ENCODE measurements at regions of chr9 and their contacts with region 1.

Region 1: DNA sequence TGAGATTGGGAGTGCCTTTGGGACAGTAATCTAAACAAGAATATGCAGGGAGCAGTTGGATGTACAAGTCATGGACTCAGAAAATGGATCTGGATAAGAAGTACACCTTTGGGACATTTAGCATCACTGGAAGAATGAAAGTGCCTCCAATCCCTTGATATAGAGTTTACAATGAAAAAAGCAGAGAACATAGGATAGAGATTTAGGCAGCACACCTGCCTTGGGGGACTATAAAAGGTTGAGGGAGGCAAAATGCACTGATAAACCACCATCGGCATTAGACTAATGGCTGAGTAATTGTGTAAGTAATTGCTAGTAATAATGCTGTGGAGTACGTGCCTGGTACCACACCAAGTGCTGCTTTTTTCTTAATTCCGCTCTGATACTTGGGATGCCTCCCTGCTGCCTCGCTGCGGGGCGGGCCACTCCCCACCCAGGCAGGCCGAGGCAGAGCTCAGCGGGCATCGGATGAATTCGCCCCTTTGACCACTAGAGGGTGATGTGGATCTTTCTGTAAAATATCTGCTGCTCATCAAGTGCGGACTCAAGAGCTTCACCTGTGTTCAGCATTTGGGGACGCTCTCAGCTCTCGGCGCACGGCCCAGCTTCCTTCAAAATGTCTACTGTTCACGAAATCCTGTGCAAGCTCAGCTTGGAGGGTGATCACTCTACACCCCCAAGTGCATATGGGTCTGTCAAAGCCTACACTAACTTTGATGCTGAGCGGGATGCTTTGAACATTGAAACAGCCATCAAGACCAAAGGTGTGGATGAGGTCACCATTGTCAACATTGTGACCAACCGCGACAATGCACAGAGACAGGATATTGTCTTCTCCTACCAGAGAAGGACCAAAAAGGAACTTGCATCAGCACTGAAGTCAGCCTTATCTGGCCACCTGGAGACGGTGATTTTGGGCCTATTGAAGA is 99.9 kb downstream of the ANKRD18B start:
- DNase-seq: peak; percentile 82 to 90
- ATAC-seq: peak; percentile 94 to 96
- H3K4me3 ChIP-seq: no peak overlapping the region
- H3K27ac ChIP-seq: peak overlapping the region; percentile 11 to 52; a peak in 2 of 6 replicates
- H3K4me1 ChIP-seq: peaks cover 23% of the 10 kb centered on the region
- CTCF ChIP-seq: peak; percentile 92
- EP300 ChIP-seq: no peak
- POLR2A ChIP-seq: no peak
- RAD21 ChIP-seq: peak; percentile 93

Region 2: GRCh38 chr9:33649463-33649862 is 25.5 kb after region 1 on chr9:
- CTCF ChIA-PET with region 1: interaction called, 22 read pairs
- POLR2A ChIA-PET with region 1: no interaction called
- DNase-seq: no peak
- ATAC-seq: no peak
- H3K4me3 ChIP-seq: no peak overlapping the region
- H3K27ac ChIP-seq: no peak overlapping the region
- H3K4me1 ChIP-seq: no peaks in the 10 kb centered on the region
- CTCF ChIP-seq: no peak
- EP300 ChIP-seq: no peak
- POLR2A ChIP-seq: no peak
- RAD21 ChIP-seq: no peak

Region 3: DNA sequence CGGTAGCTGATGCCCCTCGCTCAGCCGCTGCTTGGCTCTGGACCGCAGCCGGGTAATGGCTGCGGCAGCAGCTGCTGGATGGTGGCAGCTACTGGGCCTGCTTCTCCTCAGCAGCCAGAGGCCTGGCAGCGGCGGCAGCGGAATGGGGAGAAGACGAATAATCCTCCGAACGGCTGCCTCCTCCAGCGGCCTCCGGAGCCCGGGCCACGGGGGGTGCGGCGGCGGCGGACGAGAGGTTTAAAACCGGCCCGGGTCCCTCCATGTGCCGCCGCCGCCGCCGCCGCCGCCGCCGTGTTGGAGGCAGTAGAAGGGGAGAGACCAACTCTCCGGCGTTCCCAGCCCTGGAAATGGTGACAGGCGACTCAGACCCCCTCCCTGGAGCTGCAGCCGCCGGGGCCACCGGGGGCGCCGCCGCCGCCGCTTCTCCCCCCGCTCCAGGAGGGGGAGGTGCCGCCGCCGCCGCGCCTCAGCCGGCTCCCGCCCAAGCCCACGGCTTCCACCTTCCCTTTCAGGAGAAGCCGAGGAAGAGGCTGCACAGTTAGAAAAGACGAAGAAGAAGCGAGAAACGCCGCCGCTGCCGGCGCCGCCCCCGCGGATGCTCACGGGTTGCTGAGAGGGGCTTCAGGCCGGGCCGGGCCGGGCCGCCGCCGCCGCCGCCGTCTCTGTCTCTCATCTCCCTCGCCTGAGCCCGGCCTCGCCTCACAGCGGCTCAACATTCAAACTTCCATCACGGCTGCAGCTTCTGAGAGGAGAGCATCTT is 53.0 kb after region 1 on chr9:
- CTCF ChIA-PET with region 1: interaction called, 13 read pairs
- POLR2A ChIA-PET with region 1: interaction called, 5 read pairs
- DNase-seq: peak; percentile 29 to 60
- ATAC-seq: peak; percentile 94 to 95
- H3K4me3 ChIP-seq: peak overlapping the region; percentile 62
- H3K27ac ChIP-seq: peak overlapping the region; percentile 94 to 99
- H3K4me1 ChIP-seq: peaks cover 8% of the 10 kb centered on the region; the same call in 2 of the 3 replicates
- CTCF ChIP-seq: no peak
- EP300 ChIP-seq: no peak
- POLR2A ChIP-seq: peak; percentile 45
- RAD21 ChIP-seq: no peak

Region 4: DNA sequence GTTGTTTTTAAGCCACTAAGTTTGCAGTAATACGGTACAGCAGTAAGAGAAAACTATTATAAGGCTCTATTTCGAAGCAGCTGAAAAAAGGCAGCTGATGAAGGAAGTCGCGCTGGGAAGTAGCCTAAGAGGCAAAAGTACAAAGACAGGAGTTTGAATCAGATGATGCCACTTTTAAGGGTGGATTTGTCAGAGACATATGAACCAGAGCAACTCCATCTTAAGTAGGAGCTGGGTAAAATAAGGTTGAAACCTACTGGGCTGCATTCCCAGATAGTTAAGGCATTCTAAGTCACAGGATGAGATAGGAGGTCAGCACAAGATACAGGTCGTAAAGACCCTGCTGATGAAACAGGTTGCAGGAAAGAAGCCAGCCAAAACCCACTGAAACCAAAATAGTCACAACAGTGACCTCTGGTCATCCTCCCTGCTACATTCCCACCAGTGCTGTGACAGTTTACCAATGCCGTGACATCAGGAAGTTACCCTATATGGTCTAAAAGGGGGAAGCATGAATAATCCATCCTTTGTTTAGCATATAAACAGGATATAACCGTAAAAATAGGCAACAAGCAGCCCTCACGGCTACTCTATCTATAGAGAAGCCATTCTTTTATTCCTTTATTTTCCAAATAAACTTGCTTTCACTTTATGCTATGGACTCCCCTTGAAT is 79.6 kb after region 1 on chr9:
- CTCF ChIA-PET with region 1: interaction called, 15 read pairs
- POLR2A ChIA-PET with region 1: no interaction called
- DNase-seq: no peak
- ATAC-seq: no peak
- H3K4me3 ChIP-seq: no peak overlapping the region
- H3K27ac ChIP-seq: no peak overlapping the region
- H3K4me1 ChIP-seq: no peaks in the 10 kb centered on the region
- CTCF ChIP-seq: no peak
- EP300 ChIP-seq: no peak
- POLR2A ChIP-seq: no peak
- RAD21 ChIP-seq: no peak

Region 5: GRCh38 chr9:33731142-33731541 is 107.2 kb after region 1 on chr9:
- CTCF ChIA-PET with region 1: interaction called, 471 read pairs
- POLR2A ChIA-PET with region 1: no interaction called
- DNase-seq: no peak
- ATAC-seq: no peak
- H3K4me3 ChIP-seq: no peak overlapping the region
- H3K27ac ChIP-seq: no peak overlapping the region
- H3K4me1 ChIP-seq: 0 out of 3 replicates have a peak, but pooled peaks cover 5% of the 10 kb centered on the region
- CTCF ChIP-seq: no peak
- EP300 ChIP-seq: no peak
- POLR2A ChIP-seq: no peak
- RAD21 ChIP-seq: no peak

Region 6: DNA sequence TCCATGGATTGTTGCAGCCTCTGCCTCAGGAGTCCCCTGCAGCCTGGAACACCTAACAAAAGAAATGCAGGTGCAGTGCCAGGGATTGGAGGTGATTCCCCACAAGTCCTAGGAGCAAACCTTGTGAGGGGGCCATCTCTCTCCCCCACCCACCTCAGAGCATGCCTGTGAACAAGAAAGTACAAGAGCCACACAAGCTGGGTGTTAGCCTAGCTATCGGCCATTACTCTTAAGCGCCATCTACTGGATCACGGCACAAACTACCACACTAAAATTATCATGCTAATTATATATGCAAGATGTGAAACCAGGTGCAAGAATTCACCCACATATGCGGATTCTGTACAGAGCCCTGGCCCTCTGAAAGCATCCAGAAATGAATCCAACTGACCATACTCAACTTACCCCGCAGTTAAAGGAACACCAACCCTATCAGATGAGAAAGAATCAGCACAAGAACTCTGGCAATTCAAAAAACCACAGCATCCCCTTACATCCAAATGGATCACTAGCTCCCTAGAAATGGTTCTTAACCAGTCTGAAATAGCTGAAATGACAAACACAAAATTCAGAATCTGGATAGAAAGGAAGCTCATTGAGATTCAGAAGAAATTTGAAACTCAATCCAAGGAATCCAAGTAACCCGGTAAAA is 154.9 kb after region 1 on chr9:
- CTCF ChIA-PET with region 1: interaction called, 20 read pairs
- POLR2A ChIA-PET with region 1: no interaction called
- DNase-seq: peak; percentile 67 to 76
- ATAC-seq: peak; percentile 91 to 93
- H3K4me3 ChIP-seq: no peak overlapping the region
- H3K27ac ChIP-seq: peak overlapping the region; percentile 16 to 76; a peak in 3 of 6 replicates
- H3K4me1 ChIP-seq: peaks cover 40% of the 10 kb centered on the region
- CTCF ChIP-seq: peak; percentile 87
- EP300 ChIP-seq: no peak
- POLR2A ChIP-seq: no peak
- RAD21 ChIP-seq: peak; percentile 81 to 83

Region 7: DNA sequence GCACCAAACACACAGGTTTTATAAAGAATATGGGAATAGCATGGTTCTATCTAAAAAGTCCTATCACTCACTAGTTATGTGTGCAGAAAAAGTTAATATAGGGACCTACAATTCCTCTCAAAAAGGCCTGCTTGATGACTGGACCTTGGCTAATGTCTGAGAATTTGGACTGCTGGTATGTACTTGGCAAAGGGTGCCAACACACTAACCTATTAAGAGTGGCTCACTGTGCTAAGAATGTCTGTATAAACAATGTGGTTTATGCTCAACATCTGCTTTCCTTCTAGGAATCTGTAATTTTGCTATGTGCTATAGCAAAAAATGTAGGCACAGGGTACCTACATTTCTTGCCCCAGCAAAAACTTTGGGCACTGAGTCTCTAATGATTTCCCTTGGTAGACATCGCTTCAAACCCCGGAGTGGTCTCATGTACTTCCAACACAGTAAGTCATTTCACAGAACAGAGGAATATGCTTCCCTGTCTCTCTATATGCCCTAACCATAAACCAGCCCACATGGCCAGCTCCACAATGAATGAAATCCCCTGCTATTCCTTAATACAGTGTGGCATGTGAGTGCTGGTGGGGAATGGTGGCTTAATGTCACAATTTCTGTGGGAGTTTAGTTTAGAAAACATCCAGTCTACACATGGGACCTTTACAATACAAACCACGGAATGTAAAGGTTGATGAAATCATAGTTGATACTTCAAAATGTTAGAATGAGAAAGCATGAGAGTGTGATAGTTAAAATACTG is 323.0 kb after region 1 on chr9:
- CTCF ChIA-PET with region 1: no interaction called
- POLR2A ChIA-PET with region 1: no interaction called
- DNase-seq: peak in 1 of 2 experiments; percentile 69
- ATAC-seq: peak; percentile 80 to 86
- H3K4me3 ChIP-seq: no peak overlapping the region
- H3K27ac ChIP-seq: peak overlapping the region; percentile 61 to 75; a peak in 5 of 6 replicates
- H3K4me1 ChIP-seq: peaks cover 46% of the 10 kb centered on the region
- CTCF ChIP-seq: no peak
- EP300 ChIP-seq: 0 out of 5 replicates have a peak, but pooled peaks have one; percentile 20 to 25
- POLR2A ChIP-seq: no peak
- RAD21 ChIP-seq: no peak

Region 8: GRCh38 chr9:34376596-34377403 is 752.9 kb after region 1 on chr9 and contains the start of gene MYORG:
- CTCF ChIA-PET with region 1: no interaction called
- POLR2A ChIA-PET with region 1: no interaction called
- DNase-seq: peak; percentile 96 to 98
- ATAC-seq: peak; percentile 78 to 89
- H3K4me3 ChIP-seq: peak within 1 kb of the TSS; percentile 79
- H3K27ac ChIP-seq: peak within 1 kb of the TSS; percentile 63 to 85
- H3K4me1 ChIP-seq: peaks cover 30% of the 10 kb centered on the region
- CTCF ChIP-seq: no peak
- EP300 ChIP-seq: no peak
- POLR2A ChIP-seq: peak; percentile 50
- RAD21 ChIP-seq: no peak
- polyA plus RNA-seq, gene MYORG: 2.2 and 3.7 TPM in 2 replicates

Measured in A549 (cell line).